ENCODE measurements at regions of chr14 and their contacts with region 1.

Region 1: GRCh38 chr14:68926236-68926635 is 52.9 kb downstream of the ACTN1 start:
- DNase-seq: no peak
- ATAC-seq: no peak

Region 2: GRCh38 chr14:68979021-68979782 is 53.0 kb after region 1 on chr14 and contains the start of gene ACTN1:
- intact Hi-C with region 1: loop called in 1 of 2 experiments (anchors 10 kb)
- DNase-seq: peak; percentile 88 to 96
- ATAC-seq: peak; percentile 77
- total RNA-seq, gene ACTN1: 89.9 to 132 TPM

Measured in left colon (tissue), 2 donors.